Right ventricle myocardium inferior (tissue), 1 donor: ENCODE measurements at regions of chrX and their contacts with region 1.

Region 1: GRCh38 chrX:115690511-115691216 is 129.7 kb downstream of the PLS3 start:
- DNase-seq: no peak
- ATAC-seq: peak; percentile 67

Region 2: GRCh38 chrX:115330498-115331168 is 360.0 kb before region 1 on chrX:
- intact Hi-C with region 1: loop called (anchors 5 kb)
- DNase-seq: no peak
- ATAC-seq: no peak

Region 3: DNA sequence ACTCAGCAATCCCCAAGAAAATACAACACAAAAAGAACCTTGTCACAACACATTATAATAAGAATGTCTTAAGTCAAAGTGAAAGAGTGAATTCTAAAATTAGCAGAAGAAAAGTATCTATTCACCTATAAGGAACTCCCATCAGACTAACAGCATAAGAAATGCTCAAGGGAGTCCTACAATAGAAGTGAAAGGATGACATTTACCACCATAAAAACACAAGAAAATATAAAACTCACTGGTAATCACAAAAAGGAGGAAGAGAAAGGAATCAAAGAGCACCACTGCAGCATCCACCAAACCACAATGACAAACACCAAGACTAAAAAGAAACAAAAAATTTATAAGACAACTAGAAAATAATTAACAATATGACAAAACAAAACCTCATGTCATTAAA is 222.9 kb after region 1 on chrX:
- intact Hi-C with region 1: no loop called
- DNase-seq: no peak
- ATAC-seq: no peak